GM18951 (cell line): ENCODE measurements at regions of chr15 and their contacts with region 1.

Region 1: GRCh38 chr15:78109877-78110530 is 17.6 kb downstream of the SH2D7 start:
- POLR2A ChIP-seq: no peak

Region 2: DNA sequence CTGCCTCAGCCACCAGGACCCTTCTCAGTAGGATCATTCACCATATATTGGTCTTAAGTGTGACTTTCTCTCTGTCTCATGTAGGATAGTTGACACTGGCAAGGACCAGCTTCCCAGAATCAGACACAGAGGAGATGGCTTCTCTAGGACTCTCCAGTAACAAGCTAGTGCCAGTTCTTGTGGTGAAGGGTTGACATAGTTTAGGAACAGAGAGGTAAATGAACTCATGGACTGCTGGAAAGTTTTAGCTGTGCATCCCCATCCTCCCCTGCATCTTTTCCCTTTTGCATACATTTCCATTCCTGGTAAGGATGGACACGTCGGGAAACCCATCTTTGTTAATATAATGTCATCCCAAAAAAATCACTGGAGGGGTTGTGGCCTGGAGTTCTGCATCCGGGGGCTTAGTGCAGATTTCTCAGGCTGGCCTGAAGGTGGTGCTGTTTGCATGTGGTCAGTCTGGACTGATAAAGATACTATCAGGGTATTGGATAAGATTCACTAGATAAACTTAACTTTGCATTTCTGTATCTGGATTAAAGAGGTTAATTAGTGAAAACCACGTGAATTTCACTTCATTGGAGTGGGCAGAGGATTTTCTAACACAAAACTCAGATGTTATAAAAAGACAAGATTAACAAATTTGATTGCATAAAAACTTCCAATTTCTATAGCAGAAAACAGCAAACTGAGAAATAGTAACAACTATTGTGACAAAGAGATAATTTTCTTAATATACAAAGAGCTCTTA is 143.3 kb before region 1 on chr15:
- in situ Hi-C with region 1: loop called (anchors 5 kb)
- POLR2A ChIP-seq: no peak

Region 3: GRCh38 chr15:78182821-78183220 is 72.8 kb after region 1 on chr15:
- in situ Hi-C with region 1: no loop called
- POLR2A ChIP-seq: no peak

Region 4: DNA sequence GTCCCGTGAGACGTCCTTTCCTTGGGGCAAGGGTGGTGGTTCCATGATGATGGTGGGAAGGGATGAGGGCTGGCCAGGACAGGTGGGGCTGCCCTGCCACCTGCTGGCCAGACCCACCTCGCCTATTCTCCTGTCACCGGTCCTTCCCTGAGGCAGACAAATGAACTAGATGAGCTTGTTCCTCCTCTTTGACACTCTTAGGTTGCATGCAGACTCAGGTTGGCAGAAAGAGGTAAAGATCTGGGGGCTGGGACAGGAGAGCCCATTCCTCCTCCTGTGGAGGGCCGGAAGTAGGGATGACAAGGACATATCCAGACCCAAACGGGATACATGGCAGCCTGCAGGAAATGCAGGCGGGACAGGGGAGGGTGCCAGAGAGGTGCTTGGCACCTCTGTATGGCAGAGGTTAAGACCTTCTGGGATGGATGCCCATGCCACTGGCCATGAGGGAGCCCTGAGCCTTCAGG is 85.8 kb after region 1 on chr15:
- in situ Hi-C with region 1: loop called (anchors 5 kb)
- POLR2A ChIP-seq: no peak

Region 5: DNA sequence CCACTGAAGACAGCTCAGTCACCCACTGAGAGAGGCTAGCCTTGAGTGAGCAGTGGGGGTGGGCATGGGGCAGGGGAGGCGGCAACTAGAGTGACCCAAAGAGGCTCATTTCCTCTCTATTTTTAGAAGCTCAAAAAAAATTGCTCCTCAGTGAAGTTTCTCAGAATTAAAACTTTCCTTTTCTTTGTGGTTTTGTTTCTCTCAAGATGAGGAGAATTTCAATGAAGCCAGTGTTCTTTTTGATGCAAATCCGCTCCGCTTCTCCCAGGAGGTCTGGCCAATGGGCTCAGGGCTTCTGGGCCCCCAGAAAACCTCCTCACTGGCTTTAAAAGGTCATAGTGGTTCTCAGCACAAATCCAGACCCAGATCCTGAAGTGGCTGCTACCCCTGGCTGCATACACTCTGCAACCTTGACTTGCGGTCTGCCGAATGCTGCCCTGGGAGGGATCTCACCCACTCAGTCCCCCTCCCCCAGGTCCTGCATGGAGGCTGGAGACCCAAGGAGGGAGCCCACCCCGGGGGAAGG is 124.6 kb after region 1 on chr15 and contains the start of gene ACSBG1:
- in situ Hi-C with region 1: loop called (anchors 10 kb)
- POLR2A ChIP-seq: no peak